ENCODE measurements at regions of chr12 and their contacts with region 1.

Region 1: DNA sequence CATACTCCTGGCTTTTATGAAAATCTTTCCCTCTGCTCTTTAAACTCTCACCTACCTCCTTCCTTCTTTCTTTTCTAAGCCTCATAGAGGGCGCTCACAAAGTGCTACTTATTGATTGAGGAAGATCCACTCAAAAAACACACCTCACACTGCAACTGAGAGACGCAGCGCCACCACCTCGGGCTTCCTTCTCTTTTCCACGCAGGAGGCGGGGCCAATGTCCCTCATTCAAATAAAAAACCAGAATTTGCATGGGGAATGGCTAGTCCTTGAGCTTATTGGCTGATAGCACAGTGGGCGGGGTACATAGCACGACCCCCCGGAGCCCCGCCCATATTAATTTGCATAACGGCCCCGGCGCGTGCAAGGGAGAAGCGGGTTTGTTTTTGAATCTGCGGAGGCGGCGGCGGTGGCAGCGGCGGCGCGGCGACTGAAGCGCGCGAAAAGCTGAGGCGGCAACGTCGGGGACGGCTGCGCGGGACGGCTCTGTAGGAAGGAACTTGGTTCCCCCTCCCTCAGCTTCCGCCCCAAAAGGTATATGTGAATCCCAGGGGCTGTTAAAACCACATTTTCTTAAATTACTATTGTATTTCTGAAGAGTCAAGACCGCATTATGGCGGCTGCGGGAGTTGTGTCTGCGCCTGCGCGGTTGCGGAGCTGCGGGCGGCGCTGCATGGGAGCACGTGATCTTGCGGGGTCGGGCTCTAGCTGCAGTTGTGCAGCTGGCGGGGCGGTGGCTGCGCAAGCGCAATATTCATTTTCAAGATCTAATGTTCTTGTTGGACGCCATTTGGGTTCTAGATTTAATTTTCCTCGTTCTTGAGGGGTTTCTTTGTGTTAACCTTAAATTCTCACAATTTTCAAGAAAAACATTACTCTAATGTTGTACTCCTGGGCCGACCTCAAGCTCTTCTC is at the start of gene ATF7IP:
- DNase-seq: peak; percentile 96 to 99 (median 98)
- H3K4me3 ChIP-seq: peak within 1 kb of the TSS; percentile 78 to 88 (median 79)
- H3K27ac ChIP-seq: peak within 1 kb of the TSS; percentile 98 to 99
- H3K4me1 ChIP-seq: peaks cover 0 to 11% (median 0%) of the 10 kb centered on the region in 3 donors
- H3K27me3 ChIP-seq: no peaks in the 10 kb centered on the region
- CTCF ChIP-seq: peak; percentile 33
- total RNA-seq, gene ATF7IP: 97.1 TPM

Region 2: GRCh38 chr12:13835652-13836051 is 529.9 kb before region 1 on chr12:
- intact Hi-C with region 1: no loop called
- DNase-seq: peak in 3 of 5 donors; percentile 24 to 40 (median 39)
- H3K4me3 ChIP-seq: no peak overlapping the region
- H3K27ac ChIP-seq: no peak overlapping the region
- H3K4me1 ChIP-seq: no peaks in the 10 kb centered on the region
- H3K27me3 ChIP-seq: no peaks in the 10 kb centered on the region
- CTCF ChIP-seq: no peak

Region 3: DNA sequence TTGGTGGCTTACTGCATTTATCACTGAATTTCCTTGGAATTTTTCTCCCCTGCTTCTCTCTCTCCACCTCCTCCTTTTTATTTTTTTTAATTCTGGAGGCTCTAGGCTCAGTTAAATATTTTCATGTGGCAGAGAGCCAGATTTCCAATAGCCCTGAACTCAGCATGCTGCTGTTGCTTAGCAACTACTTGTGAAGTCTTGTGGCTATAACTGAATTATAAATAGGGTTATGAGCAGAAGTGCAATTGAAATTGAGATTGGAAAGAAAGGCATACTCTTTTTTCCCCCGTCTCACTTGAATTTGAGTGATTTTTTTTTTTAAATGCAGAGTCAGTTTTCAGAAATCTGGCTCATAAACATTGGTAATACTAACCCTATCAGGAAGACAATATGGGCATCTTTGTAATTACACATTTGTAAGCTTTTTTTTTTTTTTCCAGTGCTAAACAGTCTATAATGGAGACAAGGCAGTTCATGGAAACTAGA is 38.2 kb after region 1 on chr12:
- intact Hi-C with region 1: loop called (anchors 5 kb)
- DNase-seq: peak in 3 of 5 donors; percentile 43 to 92 (median 90)
- H3K4me3 ChIP-seq: peak overlapping the region in 2 of 3 donors; percentile 26 to 34
- H3K27ac ChIP-seq: peak overlapping the region in 1 of 2 donors; percentile 12
- H3K4me1 ChIP-seq: peaks cover 4 to 13% (median 5%) of the 10 kb centered on the region in 3 donors
- H3K27me3 ChIP-seq: no peaks in the 10 kb centered on the region
- CTCF ChIP-seq: no peak

Measured in kidney (tissue), 22 donors.